Activated CD4-positive, alpha-beta memory T cell treated with anti-CD3 and anti-CD28 coated beads, Interleukin-2, amount 10 ng/mL, durations not matched to agents 7 days and 5 days (primary cell): ENCODE measurements at regions of chr7 and their contacts with region 1.

Region 1: DNA sequence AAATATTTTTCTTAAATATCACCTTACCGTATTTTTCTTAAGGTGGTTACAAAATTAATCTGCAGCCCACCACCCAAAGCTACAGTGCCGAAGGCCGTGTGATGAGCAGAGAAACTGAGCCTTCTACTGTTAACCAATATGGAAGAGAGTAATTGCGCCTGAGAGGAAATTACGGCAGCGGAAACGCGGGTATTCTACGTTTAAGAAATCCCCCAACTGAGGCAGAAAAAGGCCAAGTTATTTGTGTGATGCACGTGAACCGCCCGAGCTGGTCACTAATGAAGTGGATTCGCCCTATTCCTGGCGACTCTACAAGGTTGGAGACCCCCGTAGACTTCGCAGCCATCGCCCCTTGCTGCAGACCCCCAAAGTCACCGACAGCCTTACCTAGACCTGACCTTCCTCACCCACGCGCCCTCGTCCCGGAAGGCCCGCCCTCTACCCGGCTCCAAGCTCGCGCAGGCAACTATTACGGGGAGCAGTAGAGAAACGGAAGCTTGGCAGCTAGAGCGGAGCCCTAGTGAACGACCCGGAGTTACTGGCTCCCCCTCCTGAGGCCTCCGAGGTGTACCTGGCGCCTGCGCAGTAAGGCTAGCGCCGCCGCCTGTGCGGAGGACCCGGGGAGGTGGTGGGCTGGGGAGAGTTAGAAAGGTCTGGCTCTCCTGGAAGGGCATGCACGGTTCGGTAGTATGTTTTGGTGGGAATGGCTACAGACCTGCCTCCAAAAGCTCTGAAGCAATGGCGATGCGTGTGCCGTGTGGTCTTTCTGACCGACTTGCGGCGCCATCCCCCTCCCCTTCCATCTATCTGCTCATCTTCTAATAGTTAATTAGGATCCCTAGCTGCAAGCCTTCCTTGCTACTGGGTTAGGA is at the start of gene MRPS33:
- DNase-seq: peak; percentile 95
- H3K4me3 Mint-ChIP-seq: peak within 1 kb of the TSS; percentile 97
- H3K27ac Mint-ChIP-seq: peak within 1 kb of the TSS; percentile 96
- H3K4me1 Mint-ChIP-seq: peaks cover 38% of the 10 kb centered on the region
- H3K27me3 Mint-ChIP-seq: peaks cover 12% of the 10 kb centered on the region
- total RNA-seq, gene MRPS33: 58.5 to 68.3 TPM

Region 2: GRCh38 chr7:140673063-140673773 is 341.5 kb before region 1 on chr7:
- CTCF ChIA-PET with region 1: interaction called, 15 read pairs
- POLR2A ChIA-PET with region 1: interaction called, 26 read pairs
- DNase-seq: peak; percentile 63
- H3K4me3 Mint-ChIP-seq: peak overlapping the region; percentile 80
- H3K27ac Mint-ChIP-seq: peak overlapping the region; percentile 75
- H3K4me1 Mint-ChIP-seq: peaks cover 34% of the 10 kb centered on the region
- H3K27me3 Mint-ChIP-seq: peaks cover 2% of the 10 kb centered on the region

Region 3: DNA sequence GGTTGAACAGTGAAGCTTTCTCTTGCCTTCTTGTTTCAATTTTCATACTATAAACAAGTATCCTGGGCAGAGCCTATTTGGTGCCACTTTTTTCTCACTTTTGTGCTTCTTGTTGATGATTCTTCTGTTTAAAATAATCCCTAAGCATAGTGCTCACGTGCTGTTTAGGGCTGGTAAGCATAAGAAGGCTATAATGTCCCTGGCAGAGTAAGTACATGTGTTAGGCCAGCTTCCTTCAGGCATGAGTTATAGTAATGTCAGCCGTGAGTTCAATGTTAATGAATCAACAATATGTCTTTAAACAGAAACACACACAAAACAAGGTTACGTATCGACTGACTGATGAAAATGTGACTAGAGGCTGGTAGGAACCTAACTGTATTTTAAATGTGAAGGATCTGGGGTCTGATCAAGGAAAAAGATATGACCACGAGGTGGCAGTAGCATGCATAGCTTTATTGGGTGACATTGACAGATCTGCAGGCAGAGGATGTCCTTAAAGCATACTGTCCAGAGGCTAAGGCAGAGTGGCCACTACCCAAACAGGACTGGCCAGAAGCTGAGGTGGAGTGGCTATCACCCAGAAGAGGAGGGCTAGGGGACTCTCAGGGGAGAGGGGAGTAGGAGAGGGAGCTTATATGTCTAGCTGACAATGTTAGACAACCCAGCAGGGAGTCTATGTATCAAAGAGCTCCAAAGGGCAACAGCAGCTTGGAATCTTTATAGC is 203.8 kb before region 1 on chr7:
- CTCF ChIA-PET with region 1: interaction called, 66 read pairs
- POLR2A ChIA-PET with region 1: interaction called, 19 read pairs
- DNase-seq: peak; percentile 59
- H3K4me3 Mint-ChIP-seq: no peak overlapping the region
- H3K27ac Mint-ChIP-seq: no peak overlapping the region
- H3K4me1 Mint-ChIP-seq: no peaks in the 10 kb centered on the region
- H3K27me3 Mint-ChIP-seq: no peaks in the 10 kb centered on the region

Region 4: DNA sequence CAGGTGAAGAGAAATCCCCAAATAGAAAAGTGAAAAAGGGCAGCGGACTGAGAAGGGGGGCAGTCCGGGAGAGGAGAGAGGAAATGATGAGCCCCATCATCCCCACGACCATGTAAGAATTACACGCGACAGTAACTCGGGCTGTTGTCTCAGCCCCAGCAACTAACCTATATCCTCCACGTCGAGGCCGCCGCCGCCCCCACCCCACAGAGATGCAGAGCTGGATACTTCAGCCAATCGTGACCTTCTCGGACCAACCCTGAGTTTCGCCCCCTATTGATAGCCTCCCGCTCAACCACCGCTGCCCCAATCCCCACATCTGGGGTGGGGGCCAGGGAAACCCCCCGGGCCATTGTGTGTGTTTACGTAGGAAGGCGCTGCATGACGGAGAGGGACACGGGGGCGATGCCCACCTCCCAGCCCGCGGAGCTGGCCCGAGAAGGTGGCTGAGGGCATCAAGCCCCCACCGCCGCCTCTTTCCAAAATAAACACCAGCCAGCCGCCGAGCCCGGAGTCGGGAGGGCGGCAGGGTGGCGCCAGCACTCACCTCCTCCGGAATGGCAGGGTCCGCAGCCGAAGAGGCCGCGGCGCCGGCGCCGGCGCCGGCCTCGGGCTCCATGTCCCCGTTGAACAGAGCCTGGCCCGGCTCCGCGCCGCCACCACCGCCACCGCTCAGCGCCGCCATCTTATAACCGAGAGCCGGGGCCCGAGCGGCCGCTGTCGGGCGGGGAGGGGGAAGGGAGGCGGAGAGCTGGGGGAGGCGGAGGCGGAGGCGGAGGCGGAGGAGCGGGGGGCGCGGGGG is 90.5 kb before region 1 on chr7:
- CTCF ChIA-PET with region 1: interaction called, 3 read pairs
- POLR2A ChIA-PET with region 1: interaction called, 30 read pairs
- DNase-seq: peak; percentile 79
- H3K4me3 Mint-ChIP-seq: no peak overlapping the region
- H3K27ac Mint-ChIP-seq: no peak overlapping the region
- H3K4me1 Mint-ChIP-seq: peaks cover 13% of the 10 kb centered on the region
- H3K27me3 Mint-ChIP-seq: no peaks in the 10 kb centered on the region

Region 5: DNA sequence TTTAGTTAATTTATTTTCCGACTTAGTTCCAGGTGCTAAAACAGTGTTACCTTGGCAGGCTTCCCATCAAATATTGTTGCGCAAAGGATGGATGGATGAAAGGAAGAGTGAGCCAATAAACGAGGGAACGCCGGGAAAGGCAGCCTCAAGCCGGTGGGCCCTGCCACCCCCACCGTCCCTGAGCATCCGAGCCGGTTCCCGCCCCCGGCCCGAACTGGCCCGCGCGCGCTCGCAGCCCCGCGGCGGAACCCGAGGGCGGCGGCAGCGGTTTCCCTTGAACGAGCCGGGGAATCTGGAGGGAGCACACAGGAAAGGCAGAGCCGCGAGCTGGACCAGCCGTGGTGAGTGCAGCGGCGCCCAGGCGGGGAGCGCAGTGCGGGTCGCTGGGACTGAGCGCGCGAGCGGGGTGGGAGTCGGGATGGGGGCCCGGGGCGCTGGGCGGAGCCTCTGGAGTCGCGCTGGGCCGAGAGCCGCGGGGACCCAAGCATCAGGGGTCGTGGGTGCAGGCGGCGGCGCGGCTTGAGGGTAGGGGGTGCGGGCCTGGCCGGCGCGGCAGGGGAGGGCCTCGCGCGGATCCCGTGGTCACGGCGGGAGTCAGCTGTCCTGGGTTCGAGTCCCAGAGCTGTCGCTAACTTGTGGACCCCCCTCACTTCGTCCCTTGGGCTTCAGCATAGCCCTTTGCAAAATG is 536.5 kb after region 1 on chr7 and contains the start of gene AGK:
- CTCF ChIA-PET with region 1: interaction called, 3 read pairs
- POLR2A ChIA-PET with region 1: interaction called, 14 read pairs
- DNase-seq: peak; percentile 82
- H3K4me3 Mint-ChIP-seq: peak within 1 kb of the TSS; percentile 90
- H3K27ac Mint-ChIP-seq: peak within 1 kb of the TSS; percentile 75
- H3K4me1 Mint-ChIP-seq: peaks cover 36% of the 10 kb centered on the region
- H3K27me3 Mint-ChIP-seq: no peaks in the 10 kb centered on the region
- total RNA-seq, gene AGK: 46.9 to 50.4 TPM